HepG2 (cell line): ENCODE measurements at regions of chr16 and their contacts with region 1.

Region 1: DNA sequence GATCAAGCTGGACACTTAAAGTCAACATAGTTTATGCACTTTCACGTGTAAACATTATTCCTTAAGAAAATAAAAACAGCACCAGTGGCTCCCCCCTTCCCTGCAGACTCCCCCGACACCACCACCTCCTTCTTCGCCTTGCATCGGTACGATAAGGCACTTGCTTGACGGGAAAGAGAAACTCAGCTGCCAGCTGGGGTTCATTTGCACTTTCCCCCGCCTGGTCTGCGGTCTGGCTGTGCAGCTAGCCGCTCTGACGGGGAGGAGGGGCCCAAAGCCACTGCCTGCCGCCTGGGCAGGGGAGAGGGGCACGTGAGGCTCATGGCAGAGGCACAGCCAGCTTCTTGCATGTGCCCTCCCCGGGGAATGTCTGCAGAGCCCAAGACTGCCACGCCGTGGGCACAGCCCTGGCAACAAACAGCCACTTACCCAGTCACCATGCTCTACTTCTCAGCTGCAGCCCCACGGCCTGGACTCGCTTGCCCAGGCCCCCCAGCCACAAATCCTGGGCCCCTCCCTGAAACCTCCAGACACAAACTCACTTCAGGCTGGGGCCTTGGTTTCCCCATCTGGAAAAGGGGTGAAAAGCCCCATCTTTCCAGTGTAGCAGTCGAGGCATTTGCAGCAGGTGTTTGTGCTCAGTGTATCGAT is 16.5 kb upstream of the PRM1 start:
- DNase-seq: peak; percentile 67
- ATAC-seq: peak; percentile 71
- H3K4me3 ChIP-seq: peak overlapping the region; percentile 15 to 67 (median 41)
- H3K27ac ChIP-seq: peak overlapping the region; percentile 68
- H3K4me1 ChIP-seq: peaks cover 97% of the 10 kb centered on the region
- H3K27me3 ChIP-seq: no peaks in the 10 kb centered on the region
- CTCF ChIP-seq: peak; percentile 47
- EP300 ChIP-seq: peak in 1 of 2 experiments; percentile 31; a peak in 1 of 4 replicates
- POLR2A ChIP-seq: 0 out of 4 replicates have a peak, but pooled peaks have one; percentile 31 to 50
- RAD21 ChIP-seq: peak; percentile 39; the same call in 1 of the 2 replicates

Region 2: GRCh38 chr16:11105038-11105903 is 192.3 kb before region 1 on chr16:
- CTCF ChIA-PET with region 1: no interaction called
- POLR2A ChIA-PET with region 1: no interaction called
- in situ Hi-C with region 1: no loop called
- intact Hi-C with region 1: loop called (anchors 5 kb)
- DNase-seq: peak; percentile 90
- ATAC-seq: peak; percentile 78
- H3K4me3 ChIP-seq: no peak overlapping the region
- H3K27ac ChIP-seq: no peak overlapping the region
- H3K4me1 ChIP-seq: peaks cover 45% of the 10 kb centered on the region
- H3K27me3 ChIP-seq: no peaks in the 10 kb centered on the region
- CTCF ChIP-seq: no peak
- EP300 ChIP-seq: 0 out of 4 replicates have a peak, but pooled peaks of 1 of the 2 experiments have one; percentile 13
- POLR2A ChIP-seq: no peak
- RAD21 ChIP-seq: no peak

Region 3: GRCh38 chr16:11263737-11264136 is 33.9 kb before region 1 on chr16:
- CTCF ChIA-PET with region 1: no interaction called
- POLR2A ChIA-PET with region 1: interaction called, 167 read pairs
- in situ Hi-C with region 1: no loop called
- intact Hi-C with region 1: loop called (anchors 5 kb)
- DNase-seq: no peak
- ATAC-seq: no peak
- H3K4me3 ChIP-seq: no peak overlapping the region
- H3K27ac ChIP-seq: no peak overlapping the region
- H3K4me1 ChIP-seq: peaks cover 93% of the 10 kb centered on the region
- H3K27me3 ChIP-seq: no peaks in the 10 kb centered on the region; a peak in 1 of 5 replicates
- CTCF ChIP-seq: no peak
- EP300 ChIP-seq: no peak
- POLR2A ChIP-seq: no peak
- RAD21 ChIP-seq: no peak

Region 4: GRCh38 chr16:11273721-11274324 is 23.8 kb before region 1 on chr16:
- CTCF ChIA-PET with region 1: no interaction called
- POLR2A ChIA-PET with region 1: interaction called, 76 read pairs
- in situ Hi-C with region 1: no loop called
- intact Hi-C with region 1: no loop called
- DNase-seq: peak; percentile 91
- ATAC-seq: peak; percentile 60
- H3K4me3 ChIP-seq: no peak overlapping the region
- H3K27ac ChIP-seq: peak overlapping the region; percentile 81
- H3K4me1 ChIP-seq: peaks cover 92% of the 10 kb centered on the region
- H3K27me3 ChIP-seq: no peaks in the 10 kb centered on the region
- CTCF ChIP-seq: no peak
- EP300 ChIP-seq: peak; percentile 11 to 68; a peak in 2 of 4 replicates
- POLR2A ChIP-seq: peak in 1 of 2 experiments; percentile 27; a peak in 1 of 4 replicates
- RAD21 ChIP-seq: 0 out of 2 replicates have a peak, but pooled peaks have one; percentile 22

Region 5: DNA sequence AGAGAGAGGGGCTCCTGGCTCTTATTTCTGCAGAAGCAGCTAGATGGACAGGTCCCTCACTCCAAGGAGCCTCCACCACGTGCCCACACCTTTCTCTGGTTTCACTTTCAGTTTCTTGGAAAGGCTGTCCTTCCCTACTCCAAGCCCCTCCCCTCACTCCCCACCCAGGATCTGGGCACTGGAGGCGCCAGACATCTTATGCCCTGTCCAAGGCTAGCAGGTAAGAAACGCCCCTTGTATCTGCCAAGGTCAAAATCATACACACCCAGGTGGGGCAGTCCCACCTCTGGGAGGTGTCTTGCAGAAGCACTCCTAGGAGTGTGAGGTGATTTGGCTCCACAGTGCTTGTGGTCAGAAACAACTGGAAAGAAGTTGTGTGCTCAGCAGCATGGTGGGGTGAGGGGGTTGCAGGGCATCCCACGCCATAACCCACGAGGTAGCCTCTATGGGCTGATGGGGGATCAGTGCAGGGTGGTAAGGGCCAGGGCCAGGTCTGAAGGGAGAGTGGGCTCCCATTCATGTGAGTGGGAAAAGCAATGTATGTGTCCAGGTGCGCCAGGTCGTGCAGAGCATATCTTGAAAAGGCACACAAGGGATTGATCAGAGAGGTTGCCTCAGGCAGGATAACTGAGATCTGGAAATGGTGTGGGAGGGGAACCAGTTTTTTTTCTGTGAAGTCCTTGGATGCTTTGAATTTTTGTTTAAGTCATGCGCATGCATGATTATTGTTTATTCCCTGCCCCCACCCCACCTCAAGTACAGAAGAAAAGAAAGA is 15.3 kb after region 1 on chr16:
- CTCF ChIA-PET with region 1: no interaction called
- POLR2A ChIA-PET with region 1: interaction called, 94 read pairs
- in situ Hi-C with region 1: no loop called
- intact Hi-C with region 1: no loop called
- DNase-seq: peak; percentile 72
- ATAC-seq: no peak
- H3K4me3 ChIP-seq: peak overlapping the region; percentile 4 to 49 (median 34); a peak in 4 of 6 replicates
- H3K27ac ChIP-seq: peak overlapping the region; percentile 88
- H3K4me1 ChIP-seq: peaks cover 73% of the 10 kb centered on the region
- H3K27me3 ChIP-seq: no peaks in the 10 kb centered on the region
- CTCF ChIP-seq: no peak; the same call in 1 of the 2 replicates
- EP300 ChIP-seq: 0 out of 4 replicates have a peak, but pooled peaks of 1 of the 2 experiments have one; percentile 18
- POLR2A ChIP-seq: peak; percentile 11 to 46
- RAD21 ChIP-seq: no peak